Activated CD4-positive, alpha-beta T cell treated with anti-CD3 and anti-CD28 coated beads, Interleukin-2, amount 10 ng/mL, durations not matched to agents 24 days and 14 days (primary cell): ENCODE measurements at regions of chr1 and their contacts with region 1.

Region 1: DNA sequence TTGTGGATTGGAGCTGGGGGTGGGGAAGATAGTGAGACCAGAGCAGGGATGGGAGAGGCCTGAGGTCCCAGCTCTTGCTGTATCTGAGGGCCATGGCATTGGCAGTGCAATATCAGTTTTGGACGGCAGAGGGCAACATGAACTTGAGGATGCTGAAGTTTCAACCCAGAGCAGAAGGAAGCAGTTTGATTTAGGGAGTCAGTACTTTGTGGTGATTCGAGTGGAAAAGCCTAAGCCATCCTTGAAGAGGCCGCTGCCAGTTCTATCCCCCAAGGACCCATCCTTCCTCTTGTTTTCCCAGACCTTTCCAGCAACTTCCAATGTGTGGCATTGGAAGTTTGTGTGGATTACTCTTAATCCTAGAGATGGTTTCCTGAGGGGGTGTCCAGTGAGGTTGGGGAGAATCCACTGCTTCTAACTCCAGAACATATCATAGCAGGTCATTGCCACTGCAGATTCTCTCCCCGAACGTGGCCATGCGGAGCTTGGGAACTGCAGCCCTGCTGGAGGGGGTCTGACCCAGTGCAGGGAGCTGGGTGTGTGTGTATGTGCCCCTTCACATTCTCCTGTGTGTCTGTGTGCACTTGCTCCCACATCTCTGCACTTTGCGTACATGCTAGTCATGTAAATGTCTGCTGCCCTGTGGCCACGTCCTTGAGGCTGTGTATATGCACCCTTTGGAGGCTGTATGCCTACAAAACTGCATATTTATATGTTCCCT is 24.1 kb downstream of the SLC26A9 start:
- DNase-seq: peak; percentile 91
- H3K4me3 Mint-ChIP-seq: no peak overlapping the region
- H3K27ac Mint-ChIP-seq: no peak overlapping the region
- H3K4me1 Mint-ChIP-seq: no peaks in the 10 kb centered on the region
- H3K27me3 Mint-ChIP-seq: peaks cover 8% of the 10 kb centered on the region

Region 2: GRCh38 chr1:205791568-205792180 is 127.5 kb before region 1 on chr1:
- intact Hi-C with region 1: loop called (anchors 1 kb)
- DNase-seq: peak; percentile 89
- H3K4me3 Mint-ChIP-seq: no peak overlapping the region
- H3K27ac Mint-ChIP-seq: no peak overlapping the region
- H3K4me1 Mint-ChIP-seq: peaks cover 3% of the 10 kb centered on the region
- H3K27me3 Mint-ChIP-seq: no peaks in the 10 kb centered on the region

Region 3: GRCh38 chr1:205907794-205908193 is 11.4 kb before region 1 on chr1:
- intact Hi-C with region 1: no loop called
- DNase-seq: no peak
- H3K4me3 Mint-ChIP-seq: no peak overlapping the region
- H3K27ac Mint-ChIP-seq: no peak overlapping the region
- H3K4me1 Mint-ChIP-seq: no peaks in the 10 kb centered on the region
- H3K27me3 Mint-ChIP-seq: peaks cover 26% of the 10 kb centered on the region

Region 4: GRCh38 chr1:205977402-205978014 is 58.3 kb after region 1 on chr1:
- intact Hi-C with region 1: loop called (anchors 1 kb)
- DNase-seq: peak; percentile 92
- H3K4me3 Mint-ChIP-seq: no peak overlapping the region
- H3K27ac Mint-ChIP-seq: no peak overlapping the region
- H3K4me1 Mint-ChIP-seq: peaks cover 2% of the 10 kb centered on the region
- H3K27me3 Mint-ChIP-seq: peaks cover 2% of the 10 kb centered on the region